Activated CD8-positive, alpha-beta memory T cell treated with anti-CD3 and anti-CD28 coated beads, Interleukin-2, amount 10 ng/mL, durations not matched to agents 7 days and 5 days (primary cell): ENCODE measurements at regions of chr17 and their contacts with region 1.

Region 1: DNA sequence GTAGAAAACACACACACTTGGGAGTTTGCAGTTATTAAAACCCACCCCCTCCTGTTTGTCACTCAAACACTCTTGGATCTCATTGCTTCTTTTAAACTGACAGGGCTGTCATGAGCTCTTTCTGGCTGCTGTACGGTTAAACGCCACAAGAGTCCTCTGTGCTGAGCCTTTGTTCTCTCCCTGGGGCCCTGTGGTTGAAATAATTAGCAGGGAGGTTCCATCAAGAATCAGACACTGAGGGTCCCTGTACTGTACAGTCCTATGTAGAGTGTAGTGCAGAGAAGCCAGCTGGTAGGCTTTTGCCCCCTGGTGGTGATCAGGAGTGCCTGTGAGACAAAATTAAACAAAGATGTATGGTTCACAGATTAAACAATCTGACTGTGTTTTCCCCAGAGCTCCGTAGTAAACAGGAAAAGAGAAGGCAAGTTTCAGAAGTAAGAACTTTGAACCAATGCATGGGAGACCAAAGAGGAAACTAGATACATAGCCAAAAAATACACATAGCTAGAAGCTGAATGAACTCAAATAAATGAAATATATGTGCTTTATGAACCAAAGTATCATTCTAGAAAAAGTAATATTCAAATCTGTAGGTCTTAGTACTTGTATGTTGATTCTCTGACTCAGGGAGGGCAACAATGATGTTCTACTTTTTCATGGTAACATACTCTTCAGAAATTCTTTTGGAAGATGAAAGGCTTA is 1.4 kb upstream of the SSH2 start:
- DNase-seq: peak; percentile 82
- ATAC-seq: peak; percentile 69
- H3K4me3 Mint-ChIP-seq: no peak overlapping the region
- H3K27ac Mint-ChIP-seq: no peak overlapping the region
- H3K4me1 Mint-ChIP-seq: peaks cover 21% of the 10 kb centered on the region
- H3K27me3 Mint-ChIP-seq: no peaks in the 10 kb centered on the region

Region 2: GRCh38 chr17:29451121-29451742 is 480.1 kb before region 1 on chr17:
- CTCF ChIA-PET with region 1: no interaction called
- DNase-seq: no peak
- ATAC-seq: no peak
- H3K4me3 Mint-ChIP-seq: no peak overlapping the region
- H3K27ac Mint-ChIP-seq: no peak overlapping the region
- H3K4me1 Mint-ChIP-seq: peaks cover 8% of the 10 kb centered on the region
- H3K27me3 Mint-ChIP-seq: no peaks in the 10 kb centered on the region

Region 3: GRCh38 chr17:29617125-29617480 is 314.3 kb before region 1 on chr17:
- CTCF ChIA-PET with region 1: interaction called, 42 read pairs
- DNase-seq: peak; percentile 96
- ATAC-seq: peak; percentile 71
- H3K4me3 Mint-ChIP-seq: peak overlapping the region; percentile 80
- H3K27ac Mint-ChIP-seq: peak overlapping the region; percentile 95
- H3K4me1 Mint-ChIP-seq: peaks cover 48% of the 10 kb centered on the region
- H3K27me3 Mint-ChIP-seq: peaks cover 17% of the 10 kb centered on the region

Region 4: DNA sequence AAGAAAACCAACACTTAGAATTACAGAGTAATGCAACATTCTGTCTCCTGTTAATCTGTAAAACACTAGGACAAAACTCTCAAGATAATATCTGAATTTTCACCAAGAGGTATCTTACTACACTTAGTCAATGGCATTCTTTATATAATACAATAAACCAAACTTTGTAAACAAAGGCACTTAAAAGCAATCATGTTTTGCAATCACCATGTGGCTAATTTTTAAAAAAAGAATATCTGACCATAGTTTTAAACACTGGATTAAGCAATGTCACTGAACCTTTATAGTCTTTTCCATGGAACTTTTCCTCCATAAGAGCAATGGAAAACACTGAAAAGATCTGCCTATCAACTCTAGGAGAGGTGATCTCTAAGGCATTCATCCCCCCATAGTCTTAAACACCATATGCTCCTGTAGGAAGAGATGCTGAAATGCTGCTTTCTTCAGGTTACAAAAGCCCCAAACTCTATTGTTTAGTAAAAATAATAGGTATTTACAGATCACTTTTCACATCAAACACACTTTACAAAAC is 164.5 kb before region 1 on chr17:
- CTCF ChIA-PET with region 1: no interaction called
- DNase-seq: no peak
- ATAC-seq: no peak
- H3K4me3 Mint-ChIP-seq: no peak overlapping the region
- H3K27ac Mint-ChIP-seq: no peak overlapping the region
- H3K4me1 Mint-ChIP-seq: peaks cover 3% of the 10 kb centered on the region
- H3K27me3 Mint-ChIP-seq: no peaks in the 10 kb centered on the region

Region 5: DNA sequence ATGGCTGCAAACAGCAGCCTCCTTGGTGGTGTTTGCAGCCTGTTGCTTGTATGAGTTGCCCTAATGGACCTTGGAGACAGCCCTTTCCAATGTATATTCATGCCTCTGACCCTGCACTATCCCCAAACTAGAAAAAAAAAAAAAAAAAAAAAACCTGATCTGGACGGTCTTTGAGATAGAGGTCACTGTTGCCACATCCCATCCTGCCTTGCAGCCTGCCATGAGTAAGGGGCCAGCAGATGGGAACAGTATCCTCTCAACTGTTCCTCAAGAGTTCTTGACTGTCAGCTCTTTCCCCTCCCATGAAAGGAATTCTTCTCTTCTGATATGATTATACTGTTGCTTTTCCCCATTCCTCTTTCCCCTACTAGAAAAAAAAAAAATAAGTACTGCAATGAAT is 153.7 kb before region 1 on chr17:
- CTCF ChIA-PET with region 1: interaction called, 13 read pairs
- DNase-seq: no peak
- ATAC-seq: no peak
- H3K4me3 Mint-ChIP-seq: no peak overlapping the region
- H3K27ac Mint-ChIP-seq: no peak overlapping the region
- H3K4me1 Mint-ChIP-seq: peaks cover 9% of the 10 kb centered on the region
- H3K27me3 Mint-ChIP-seq: no peaks in the 10 kb centered on the region

Region 6: DNA sequence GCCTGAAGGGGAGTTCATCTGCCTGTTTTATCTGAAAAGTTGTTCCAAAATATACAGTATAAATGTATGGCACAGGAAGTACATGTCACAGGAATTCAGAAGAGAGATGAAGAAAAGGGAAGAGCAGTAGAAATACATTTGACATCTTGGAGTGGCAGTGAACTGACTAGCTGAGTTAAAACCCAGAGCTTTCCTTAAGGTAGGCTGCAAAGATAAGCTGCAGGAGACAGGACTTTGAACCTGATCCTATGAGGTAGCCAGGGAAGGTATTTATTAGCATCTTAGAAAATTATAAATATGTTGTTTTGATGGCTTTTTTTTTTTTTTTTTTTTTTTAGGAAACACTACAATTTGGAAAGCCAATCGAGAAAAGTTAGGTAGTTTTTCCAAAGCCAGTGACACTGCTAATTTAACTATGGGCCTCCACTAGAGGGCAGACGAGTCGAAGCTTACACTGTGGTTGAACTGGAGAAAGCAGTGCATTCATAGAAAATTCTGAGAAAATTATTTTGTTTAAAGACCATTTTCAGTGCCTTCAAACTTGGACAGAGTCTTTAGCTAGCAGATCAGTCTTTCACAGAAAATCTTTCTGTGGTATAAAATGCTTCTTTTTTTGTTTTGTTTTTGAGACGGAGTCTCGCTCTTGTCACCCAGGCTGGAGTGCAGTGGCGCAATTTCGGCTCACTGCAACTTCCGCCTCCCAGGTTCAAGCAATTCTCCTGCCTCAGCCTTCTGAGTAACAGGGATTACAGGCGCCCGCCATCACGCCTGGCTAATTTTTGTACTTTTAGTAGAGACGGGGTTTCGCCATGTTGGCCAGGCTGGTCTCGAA is 123.6 kb before region 1 on chr17:
- CTCF ChIA-PET with region 1: interaction called, 195 read pairs
- DNase-seq: peak; percentile 78
- ATAC-seq: peak; percentile 78
- H3K4me3 Mint-ChIP-seq: no peak overlapping the region
- H3K27ac Mint-ChIP-seq: no peak overlapping the region
- H3K4me1 Mint-ChIP-seq: peaks cover 19% of the 10 kb centered on the region
- H3K27me3 Mint-ChIP-seq: no peaks in the 10 kb centered on the region

Region 7: GRCh38 chr17:29867643-29868181 is 63.7 kb before region 1 on chr17:
- CTCF ChIA-PET with region 1: interaction called, 12 read pairs
- DNase-seq: no peak
- ATAC-seq: no peak
- H3K4me3 Mint-ChIP-seq: no peak overlapping the region
- H3K27ac Mint-ChIP-seq: no peak overlapping the region
- H3K4me1 Mint-ChIP-seq: peaks cover 7% of the 10 kb centered on the region
- H3K27me3 Mint-ChIP-seq: no peaks in the 10 kb centered on the region

Region 8: DNA sequence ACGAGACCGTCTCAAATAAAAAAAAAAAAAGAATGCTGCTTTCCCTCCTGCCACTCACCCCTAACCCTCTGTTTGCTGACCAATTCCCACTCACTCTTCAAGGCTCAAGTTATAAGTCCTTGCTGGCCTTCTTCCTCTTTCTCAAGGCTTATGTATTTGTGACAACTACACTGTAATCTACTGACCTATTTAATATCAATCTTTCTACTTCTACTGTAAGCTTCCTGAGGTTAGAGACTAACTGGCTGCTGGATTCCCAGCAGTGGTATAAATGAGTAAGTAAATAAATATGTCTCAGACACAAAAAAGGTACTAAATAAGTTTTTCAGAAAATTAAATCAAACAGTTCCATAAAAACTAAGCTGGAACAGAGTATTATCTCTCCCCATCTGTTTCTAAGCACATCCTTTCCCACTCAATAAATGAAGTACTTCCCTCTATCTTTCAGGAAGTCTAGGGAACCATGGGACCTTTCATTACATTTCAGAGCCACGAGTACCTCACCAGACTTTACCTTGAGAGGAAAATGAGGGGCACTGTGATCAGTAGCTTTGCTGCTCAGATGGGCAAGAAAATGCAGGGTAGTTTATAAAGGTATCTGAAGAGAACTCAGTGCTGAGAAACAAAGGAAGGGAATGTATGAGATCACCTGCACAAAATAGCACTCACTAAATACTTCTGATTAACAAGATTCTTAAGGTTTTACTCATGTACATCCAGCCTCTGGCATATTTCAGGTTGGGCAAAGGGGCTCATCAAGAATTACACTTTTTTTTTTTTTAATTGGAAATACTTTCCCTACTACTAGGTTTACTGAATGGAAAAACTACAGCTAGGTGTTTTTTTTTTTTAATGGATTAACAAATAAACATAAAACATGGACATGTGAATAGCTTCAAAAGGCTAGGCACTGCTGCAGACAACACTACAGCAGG is 12.2 kb before region 1 on chr17:
- CTCF ChIA-PET with region 1: interaction called, 13 read pairs
- DNase-seq: no peak
- ATAC-seq: no peak
- H3K4me3 Mint-ChIP-seq: no peak overlapping the region
- H3K27ac Mint-ChIP-seq: no peak overlapping the region
- H3K4me1 Mint-ChIP-seq: peaks cover 10% of the 10 kb centered on the region
- H3K27me3 Mint-ChIP-seq: no peaks in the 10 kb centered on the region

Region 9: DNA sequence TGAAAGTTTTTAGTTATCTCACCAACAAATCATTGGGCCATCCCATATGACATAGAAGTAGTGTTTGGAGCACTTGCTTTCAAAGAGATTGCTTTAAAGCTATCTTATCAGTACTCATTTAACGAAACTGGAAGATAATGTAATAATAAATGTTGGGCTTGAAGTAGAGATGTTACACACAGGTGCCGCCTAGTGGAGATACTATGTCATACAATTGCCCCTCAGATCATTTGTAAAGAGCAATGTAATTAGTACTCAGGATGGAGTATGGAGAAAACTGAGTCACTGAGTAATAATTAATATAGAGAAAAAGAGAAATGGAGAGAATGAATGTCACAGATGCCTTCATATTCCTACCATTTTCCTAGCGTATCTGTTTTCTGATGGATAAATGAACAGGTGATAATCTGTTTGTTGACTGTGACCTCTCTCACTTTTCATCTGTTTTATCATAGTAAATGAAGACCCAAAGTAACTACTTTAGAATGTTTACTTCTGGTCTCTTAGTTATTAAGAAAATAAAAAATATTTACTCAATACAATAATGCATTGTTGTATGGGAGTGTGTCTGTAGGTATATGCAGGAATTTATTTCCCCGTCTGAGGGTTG is 90.4 kb after region 1 on chr17:
- CTCF ChIA-PET with region 1: interaction called, 11 read pairs
- DNase-seq: peak; percentile 47
- ATAC-seq: no peak
- H3K4me3 Mint-ChIP-seq: no peak overlapping the region
- H3K27ac Mint-ChIP-seq: no peak overlapping the region
- H3K4me1 Mint-ChIP-seq: peaks cover 1% of the 10 kb centered on the region
- H3K27me3 Mint-ChIP-seq: peaks cover 13% of the 10 kb centered on the region